ENCODE measurements at regions of chr6 and their contacts with region 1.

Region 1: GRCh38 chr6:26234421-26235296 is 130.3 kb upstream of the BTN3A2 start:
- DNase-seq: peak; percentile 48 to 94 (median 85)
- ATAC-seq: peak; percentile 80
- H3K4me3 ChIP-seq: peak overlapping the region; percentile 93
- H3K4me3 Mint-ChIP-seq: peak overlapping the region; percentile 87 to 99 (median 94)
- H3K27ac ChIP-seq: peak overlapping the region; percentile 87
- H3K27ac Mint-ChIP-seq: peak overlapping the region; percentile 93 to 100 (median 98)
- H3K4me1 ChIP-seq: peaks cover under 1 to 18% of the 10 kb centered on the region in 2 donors
- H3K4me1 Mint-ChIP-seq: peaks cover 18 to 52% (median 38%) of the 10 kb centered on the region in 7 donors
- H3K27me3 ChIP-seq: no peaks in the 10 kb centered on the region
- H3K27me3 Mint-ChIP-seq: peaks cover 0 to 15% (median 0%) of the 10 kb centered on the region in 5 donors

Region 2: GRCh38 chr6:26054857-26055669 is 179.6 kb before region 1 on chr6:
- CTCF ChIA-PET with region 1: interaction called, 3 read pairs
- POLR2A ChIA-PET with region 1: interaction called, 22 read pairs
- intact Hi-C with region 1: no loop called
- DNase-seq: peak; percentile 54 to 94 (median 90)
- ATAC-seq: peak; percentile 81
- H3K4me3 ChIP-seq: peak overlapping the region; percentile 93
- H3K4me3 Mint-ChIP-seq: peak overlapping the region; percentile 88 to 99 (median 95)
- H3K27ac ChIP-seq: peak overlapping the region; percentile 83
- H3K27ac Mint-ChIP-seq: peak overlapping the region; percentile 95 to 99 (median 98)
- H3K4me1 ChIP-seq: peaks cover 0 to 14% of the 10 kb centered on the region in 2 donors
- H3K4me1 Mint-ChIP-seq: peaks cover 9 to 52% (median 10%) of the 10 kb centered on the region in 7 donors
- H3K27me3 ChIP-seq: no peaks in the 10 kb centered on the region
- H3K27me3 Mint-ChIP-seq: peaks cover 0 to 10% (median 0%) of the 10 kb centered on the region in 5 donors

Region 3: GRCh38 chr6:26204332-26205165 is 30.1 kb before region 1 on chr6:
- CTCF ChIA-PET with region 1: interaction called, 12 read pairs
- POLR2A ChIA-PET with region 1: interaction called, 2,165 read pairs
- intact Hi-C with region 1: loop called (anchors 1 kb)
- DNase-seq: peak; percentile 67 to 95 (median 89)
- ATAC-seq: peak; percentile 72
- H3K4me3 ChIP-seq: peak overlapping the region; percentile 77
- H3K4me3 Mint-ChIP-seq: no peak overlapping the region
- H3K27ac ChIP-seq: peak overlapping the region; percentile 90
- H3K27ac Mint-ChIP-seq: no peak overlapping the region
- H3K4me1 ChIP-seq: peaks cover 20 to 23% of the 10 kb centered on the region in 2 donors
- H3K4me1 Mint-ChIP-seq: peaks cover 9 to 36% (median 26%) of the 10 kb centered on the region in 7 donors
- H3K27me3 ChIP-seq: no peaks in the 10 kb centered on the region
- H3K27me3 Mint-ChIP-seq: peaks cover 0 to 5% (median 0%) of the 10 kb centered on the region in 5 donors

Region 4: GRCh38 chr6:26322645-26323482 is 88.2 kb after region 1 on chr6:
- CTCF ChIA-PET with region 1: no interaction called
- POLR2A ChIA-PET with region 1: interaction called, 11 read pairs
- intact Hi-C with region 1: no loop called
- DNase-seq: peak in 8 of 9 donors; percentile 67 to 85 (median 79)
- ATAC-seq: peak; percentile 72
- H3K4me3 ChIP-seq: peak overlapping the region; percentile 82
- H3K4me3 Mint-ChIP-seq: peak overlapping the region; percentile 64 to 92 (median 88)
- H3K27ac ChIP-seq: peak overlapping the region; percentile 60
- H3K27ac Mint-ChIP-seq: peak overlapping the region; percentile 44 to 93 (median 89)
- H3K4me1 ChIP-seq: peaks cover 5 to 8% of the 10 kb centered on the region in 2 donors
- H3K4me1 Mint-ChIP-seq: peaks cover 2 to 58% (median 36%) of the 10 kb centered on the region in 7 donors
- H3K27me3 ChIP-seq: no peaks in the 10 kb centered on the region
- H3K27me3 Mint-ChIP-seq: peaks cover 5 to 21% (median 17%) of the 10 kb centered on the region in 5 donors

Region 5: DNA sequence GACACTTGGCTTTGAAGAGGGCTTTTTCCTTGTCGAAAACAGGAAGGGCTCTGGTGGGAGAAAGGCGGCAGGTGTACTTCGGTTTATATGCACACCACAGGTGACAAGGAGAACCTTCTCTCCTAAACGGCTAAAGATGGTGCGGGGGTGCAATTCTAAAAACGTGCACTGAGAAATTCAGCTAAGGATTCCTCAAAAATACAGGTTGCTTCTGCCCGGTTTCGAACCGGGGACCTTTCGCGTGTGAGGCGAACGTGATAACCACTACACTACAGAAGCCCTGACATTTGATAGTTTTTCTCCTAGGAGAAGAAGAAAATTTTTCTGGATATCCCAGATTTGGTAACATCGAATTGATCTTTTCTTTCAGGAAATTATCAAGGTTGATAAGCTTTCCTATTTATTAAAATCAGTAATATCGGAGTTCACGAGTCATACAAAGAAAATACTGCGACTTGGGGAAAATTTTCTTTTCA is 1045.4 kb after region 1 on chr6:
- CTCF ChIA-PET with region 1: no interaction called
- POLR2A ChIA-PET with region 1: no interaction called
- intact Hi-C with region 1: no loop called
- DNase-seq: peak in 1 of 9 donors; percentile 13
- ATAC-seq: no peak
- H3K4me3 ChIP-seq: no peak overlapping the region
- H3K4me3 Mint-ChIP-seq: peak overlapping the region in 5 of 10 donors; percentile 28 to 51 (median 44)
- H3K27ac ChIP-seq: no peak overlapping the region
- H3K27ac Mint-ChIP-seq: peak overlapping the region in 5 of 9 donors; percentile 59 to 83 (median 77)
- H3K4me1 ChIP-seq: no peaks in the 10 kb centered on the region
- H3K4me1 Mint-ChIP-seq: peaks cover 0 to 19% (median 4%) of the 10 kb centered on the region in 7 donors
- H3K27me3 ChIP-seq: peaks cover 32 to 52% of the 10 kb centered on the region in 2 donors
- H3K27me3 Mint-ChIP-seq: peaks cover 74 to 88% (median 86%) of the 10 kb centered on the region in 5 donors

Region 6: DNA sequence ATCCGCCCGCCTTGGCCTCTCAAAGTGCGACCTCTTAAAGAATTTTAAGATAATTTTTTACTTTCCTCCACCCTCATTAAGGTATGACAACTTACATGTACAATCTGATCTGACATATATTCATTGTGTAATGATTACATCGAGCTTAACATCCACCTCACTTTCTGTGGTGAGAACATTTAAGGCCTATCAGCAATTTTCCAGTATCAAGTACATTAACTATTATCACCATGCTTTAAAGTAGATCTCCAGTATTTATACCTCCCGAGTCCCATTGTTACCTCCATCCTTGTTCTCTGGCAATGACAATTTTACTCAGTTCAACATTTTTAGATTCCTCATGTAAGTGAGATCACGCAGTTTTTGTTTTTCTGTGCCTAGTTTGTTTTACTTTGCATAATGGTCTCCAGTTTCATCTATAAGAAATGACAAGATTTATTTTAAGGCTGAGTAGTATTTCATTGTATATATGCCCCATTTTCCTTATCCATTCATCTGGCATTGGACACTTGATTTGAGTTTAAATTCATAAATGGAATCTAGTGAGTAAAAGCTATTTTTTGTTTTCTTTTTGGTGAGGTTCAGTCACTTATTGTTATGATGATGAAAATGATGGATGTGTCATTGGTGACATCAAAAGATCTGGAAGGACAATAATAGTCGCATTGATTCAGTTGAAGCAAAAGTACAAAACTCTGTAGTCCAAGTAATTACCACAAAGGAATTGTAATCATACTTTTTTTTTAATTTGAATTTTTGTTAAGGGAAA is 1590.5 kb after region 1 on chr6:
- CTCF ChIA-PET with region 1: no interaction called
- POLR2A ChIA-PET with region 1: interaction called, 10 read pairs
- intact Hi-C with region 1: no loop called
- DNase-seq: no peak
- ATAC-seq: no peak
- H3K4me3 ChIP-seq: peak overlapping the region; percentile 87
- H3K4me3 Mint-ChIP-seq: peak overlapping the region; percentile 82 to 99 (median 94)
- H3K27ac ChIP-seq: peak overlapping the region; percentile 89
- H3K27ac Mint-ChIP-seq: peak overlapping the region; percentile 90 to 100 (median 98)
- H3K4me1 ChIP-seq: peaks cover 6% of the 10 kb centered on the region in 2 donors
- H3K4me1 Mint-ChIP-seq: peaks cover 11 to 50% (median 33%) of the 10 kb centered on the region in 7 donors
- H3K27me3 ChIP-seq: no peaks in the 10 kb centered on the region
- H3K27me3 Mint-ChIP-seq: peaks cover 0 to 4% (median 0%) of the 10 kb centered on the region in 5 donors

Measured in naive thymus-derived CD4-positive, alpha-beta T cell (primary cell).